ENCODE measurements at regions of chr22 and their contacts with region 1.

Region 1: DNA sequence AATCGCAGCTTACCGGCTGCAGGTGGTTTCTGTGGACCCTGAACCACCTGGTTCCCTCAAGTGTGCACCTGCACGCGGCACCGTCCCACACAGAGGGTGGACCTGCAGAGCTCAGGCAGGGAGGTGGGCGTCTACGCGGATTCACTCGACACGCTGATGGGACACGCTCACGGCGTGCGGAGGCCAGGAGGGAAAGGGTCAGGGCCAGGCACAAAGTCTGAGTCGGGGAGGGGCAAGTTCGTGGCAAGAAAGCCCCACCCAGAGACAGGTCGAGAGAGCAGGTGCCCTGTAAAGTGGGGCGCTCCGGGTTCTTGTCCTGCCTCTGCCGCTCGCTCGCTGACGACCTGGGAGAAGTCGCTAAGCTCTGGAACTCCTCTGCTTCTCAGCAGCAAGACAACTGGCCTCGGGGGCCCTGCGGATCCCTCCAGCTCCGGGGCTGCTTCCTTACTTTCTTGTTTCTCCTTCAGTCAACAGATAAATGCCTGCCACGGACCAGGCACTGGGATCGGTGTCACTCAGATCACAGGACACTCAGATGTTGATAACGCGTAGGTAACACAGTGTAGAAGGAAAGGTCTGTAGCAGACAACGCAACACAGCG is 72.4 kb upstream of the NUP50 start:
- DNase-seq: no peak
- ATAC-seq: no peak
- H3K4me3 ChIP-seq: no peak overlapping the region
- H3K27ac ChIP-seq: no peak overlapping the region; the same call in 1 of the 2 replicates
- H3K4me1 ChIP-seq: no peaks in the 10 kb centered on the region; the same call in 1 of the 2 replicates
- H3K27me3 ChIP-seq: no peaks in the 10 kb centered on the region
- CTCF ChIP-seq: no peak

Region 2: DNA sequence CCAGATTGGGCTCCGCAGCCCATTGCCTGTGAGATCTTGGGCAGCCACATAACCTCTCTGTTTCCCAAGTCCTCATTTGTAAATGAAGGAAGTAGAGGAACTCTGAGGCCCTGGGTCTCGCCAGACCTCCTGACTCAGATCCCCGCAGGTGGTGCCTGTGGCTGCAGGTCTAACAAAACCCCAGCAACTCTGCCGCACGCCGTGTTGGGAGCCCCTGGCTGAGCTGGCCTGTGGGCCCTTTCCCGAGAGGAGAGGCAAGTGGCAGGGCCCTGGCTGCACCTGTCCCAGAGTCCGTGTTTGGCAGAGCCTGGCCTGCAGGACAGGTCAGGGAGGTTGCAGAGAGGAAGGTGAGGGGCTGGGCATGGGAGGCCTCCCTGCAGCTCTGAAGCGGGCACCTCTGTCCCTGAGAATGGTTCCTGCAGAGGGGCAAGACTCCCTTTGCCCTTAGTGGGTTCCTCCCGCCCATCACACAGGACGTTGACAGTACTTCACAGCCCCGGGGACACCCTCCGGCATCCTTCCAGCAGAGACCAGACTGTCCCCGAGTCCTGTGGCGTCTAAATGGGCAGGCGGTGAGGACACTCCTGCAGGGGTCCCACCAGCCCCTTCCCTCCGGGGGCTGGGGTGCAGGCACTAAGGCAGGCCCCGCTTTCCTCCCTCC is 271.3 kb before region 1 on chr22:
- CTCF ChIA-PET with region 1: interaction called, 6 read pairs
- POLR2A ChIA-PET with region 1: no interaction called
- in situ Hi-C with region 1: no loop called
- intact Hi-C with region 1: loop called (anchors 5 kb)
- DNase-seq: no peak
- ATAC-seq: peak; percentile 26
- H3K4me3 ChIP-seq: no peak overlapping the region
- H3K27ac ChIP-seq: no peak overlapping the region
- H3K4me1 ChIP-seq: no peaks in the 10 kb centered on the region
- H3K27me3 ChIP-seq: no peaks in the 10 kb centered on the region
- CTCF ChIP-seq: no peak

Region 3: GRCh38 chr22:45026511-45026910 is 64.8 kb before region 1 on chr22:
- CTCF ChIA-PET with region 1: no interaction called
- POLR2A ChIA-PET with region 1: interaction called, 10 read pairs
- in situ Hi-C with region 1: no loop called
- intact Hi-C with region 1: no loop called
- DNase-seq: no peak
- ATAC-seq: no peak
- H3K4me3 ChIP-seq: no peak overlapping the region
- H3K27ac ChIP-seq: no peak overlapping the region
- H3K4me1 ChIP-seq: no peaks in the 10 kb centered on the region
- H3K27me3 ChIP-seq: peaks cover 3% of the 10 kb centered on the region
- CTCF ChIP-seq: no peak

Region 4: GRCh38 chr22:45072322-45072903 is 18.9 kb before region 1 on chr22:
- CTCF ChIA-PET with region 1: no interaction called
- POLR2A ChIA-PET with region 1: no interaction called
- in situ Hi-C with region 1: no loop called
- intact Hi-C with region 1: no loop called
- DNase-seq: no peak
- ATAC-seq: peak; percentile 92
- H3K4me3 ChIP-seq: peak overlapping the region; percentile 14 to 31; a peak in 3 of 4 replicates
- H3K27ac ChIP-seq: no peak overlapping the region; the same call in 1 of the 2 replicates
- H3K4me1 ChIP-seq: peaks cover 10% of the 10 kb centered on the region; the same call in 1 of the 2 replicates
- H3K27me3 ChIP-seq: no peaks in the 10 kb centered on the region
- CTCF ChIP-seq: no peak